ENCODE measurements at regions of chr7 and their contacts with region 1.

Region 1: GRCh38 chr7:137953665-137954470 is 48.0 kb downstream of the CREB3L2 start:
- DNase-seq: no peak
- ATAC-seq: no peak
- H3K4me3 ChIP-seq: no peak overlapping the region
- H3K27ac ChIP-seq: peak overlapping the region in 4 of 10 donors; percentile 5 to 47 (median 21)
- H3K4me1 ChIP-seq: peaks cover 3 to 93% (median 66%) of the 10 kb centered on the region in 9 donors
- H3K27me3 ChIP-seq: no peaks in the 10 kb centered on the region
- CTCF ChIP-seq: no peak

Region 2: GRCh38 chr7:137742051-137742450 is 211.8 kb before region 1 on chr7:
- intact Hi-C with region 1: no loop called
- DNase-seq: no peak
- ATAC-seq: no peak
- H3K4me3 ChIP-seq: no peak overlapping the region
- H3K27ac ChIP-seq: no peak overlapping the region
- H3K4me1 ChIP-seq: no peaks in the 10 kb centered on the region
- H3K27me3 ChIP-seq: peaks cover 0 to 6% (median 0%) of the 10 kb centered on the region in 7 donors
- CTCF ChIP-seq: no peak

Region 3: DNA sequence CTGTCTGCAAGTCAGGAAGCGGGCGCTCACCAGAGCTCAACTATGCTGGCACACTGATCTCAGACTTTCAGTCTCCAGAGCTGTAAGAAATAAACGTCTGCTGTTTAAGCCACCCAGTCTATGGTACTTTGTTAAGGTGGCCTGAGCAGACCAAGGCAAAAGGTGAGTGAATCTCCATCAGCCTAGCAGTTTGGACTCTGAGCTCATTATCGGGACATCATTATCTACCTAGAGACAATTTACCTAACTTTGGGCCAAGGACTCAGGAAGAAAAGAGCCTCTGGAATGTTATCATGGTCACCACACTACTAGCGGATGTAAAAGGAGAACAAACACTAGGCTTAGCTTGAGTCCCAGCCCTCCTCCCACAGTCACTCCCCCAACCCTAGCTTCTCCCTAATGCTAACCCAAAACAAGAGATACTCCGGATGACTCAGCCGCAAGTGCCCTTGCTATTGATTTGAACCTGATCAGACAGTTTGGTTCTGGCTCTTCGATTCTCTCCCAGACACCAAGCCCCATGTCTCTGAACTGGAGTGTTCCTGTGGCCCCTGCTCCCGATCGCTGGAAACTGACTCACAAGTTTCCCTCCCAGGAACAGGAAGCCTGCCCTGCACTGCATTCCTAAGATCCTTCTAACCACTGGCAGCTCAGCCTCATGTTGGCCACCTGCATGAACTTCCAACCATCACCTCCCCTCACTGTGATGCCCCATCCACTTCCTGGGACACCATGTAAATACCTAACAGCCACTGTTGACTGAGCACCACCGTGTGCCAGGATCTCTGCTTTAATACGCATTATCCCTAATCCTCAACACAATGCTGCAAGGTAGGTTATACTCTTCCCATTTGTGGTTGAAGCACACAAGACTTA is 13.5 kb after region 1 on chr7:
- intact Hi-C with region 1: loop called in 1 of 10 experiments (anchors 1 kb)
- DNase-seq: no peak
- ATAC-seq: peak in 2 of 8 donors; percentile 11 to 21
- H3K4me3 ChIP-seq: no peak overlapping the region
- H3K27ac ChIP-seq: peak overlapping the region in 4 of 10 donors; percentile 5 to 54 (median 17)
- H3K4me1 ChIP-seq: peaks cover 8 to 87% (median 54%) of the 10 kb centered on the region in 9 donors
- H3K27me3 ChIP-seq: no peaks in the 10 kb centered on the region
- CTCF ChIP-seq: no peak

Region 4: DNA sequence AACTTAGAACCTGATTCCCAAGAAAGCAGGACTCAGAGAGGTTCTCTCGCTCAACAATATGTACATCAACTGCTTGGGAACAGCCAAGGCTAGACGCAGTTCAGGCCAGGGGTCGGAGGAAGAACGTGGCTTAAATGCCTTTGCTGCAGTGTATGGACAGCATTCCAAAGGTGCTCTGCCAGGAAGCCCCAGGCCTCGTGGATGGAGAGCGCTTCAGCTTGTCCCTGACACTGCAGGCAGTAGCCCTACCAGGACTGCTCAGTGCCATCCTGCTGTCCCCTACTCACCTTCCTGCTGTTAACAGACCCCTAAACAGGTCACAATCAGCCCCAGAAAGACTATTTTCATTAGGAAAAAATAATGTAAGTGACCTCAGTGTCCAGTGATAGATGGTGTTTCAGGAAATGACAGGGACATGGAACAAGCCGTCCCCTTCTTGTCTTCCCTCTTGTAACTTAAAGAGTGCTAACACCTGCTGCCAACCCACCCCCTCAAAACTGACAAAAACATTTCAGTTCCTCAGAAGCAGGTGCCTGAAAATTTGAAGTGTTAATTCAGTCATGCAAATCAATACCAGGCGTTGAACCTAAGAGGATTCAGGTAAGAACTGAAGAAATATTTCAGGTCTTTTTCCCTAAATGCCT is 31.5 kb after region 1 on chr7:
- intact Hi-C with region 1: loop called in 3 of 10 experiments (anchors 1 to 5 kb)
- DNase-seq: no peak
- ATAC-seq: no peak
- H3K4me3 ChIP-seq: no peak overlapping the region
- H3K27ac ChIP-seq: peak overlapping the region in 5 of 10 donors; percentile 9 to 90 (median 62)
- H3K4me1 ChIP-seq: peaks cover 24 to 100% (median 82%) of the 10 kb centered on the region in 9 donors
- H3K27me3 ChIP-seq: no peaks in the 10 kb centered on the region
- CTCF ChIP-seq: no peak

Region 5: GRCh38 chr7:137992550-137993394 is 38.9 kb after region 1 on chr7:
- intact Hi-C with region 1: loop called in 2 of 10 experiments (anchors 5 kb)
- DNase-seq: peak in 1 of 2 donors; percentile 69
- ATAC-seq: peak; percentile 64 to 78 (median 69)
- H3K4me3 ChIP-seq: no peak overlapping the region
- H3K27ac ChIP-seq: peak overlapping the region; percentile 41 to 90 (median 68)
- H3K4me1 ChIP-seq: peaks cover 13 to 99% (median 94%) of the 10 kb centered on the region in 9 donors
- H3K27me3 ChIP-seq: no peaks in the 10 kb centered on the region
- CTCF ChIP-seq: no peak

Region 6: DNA sequence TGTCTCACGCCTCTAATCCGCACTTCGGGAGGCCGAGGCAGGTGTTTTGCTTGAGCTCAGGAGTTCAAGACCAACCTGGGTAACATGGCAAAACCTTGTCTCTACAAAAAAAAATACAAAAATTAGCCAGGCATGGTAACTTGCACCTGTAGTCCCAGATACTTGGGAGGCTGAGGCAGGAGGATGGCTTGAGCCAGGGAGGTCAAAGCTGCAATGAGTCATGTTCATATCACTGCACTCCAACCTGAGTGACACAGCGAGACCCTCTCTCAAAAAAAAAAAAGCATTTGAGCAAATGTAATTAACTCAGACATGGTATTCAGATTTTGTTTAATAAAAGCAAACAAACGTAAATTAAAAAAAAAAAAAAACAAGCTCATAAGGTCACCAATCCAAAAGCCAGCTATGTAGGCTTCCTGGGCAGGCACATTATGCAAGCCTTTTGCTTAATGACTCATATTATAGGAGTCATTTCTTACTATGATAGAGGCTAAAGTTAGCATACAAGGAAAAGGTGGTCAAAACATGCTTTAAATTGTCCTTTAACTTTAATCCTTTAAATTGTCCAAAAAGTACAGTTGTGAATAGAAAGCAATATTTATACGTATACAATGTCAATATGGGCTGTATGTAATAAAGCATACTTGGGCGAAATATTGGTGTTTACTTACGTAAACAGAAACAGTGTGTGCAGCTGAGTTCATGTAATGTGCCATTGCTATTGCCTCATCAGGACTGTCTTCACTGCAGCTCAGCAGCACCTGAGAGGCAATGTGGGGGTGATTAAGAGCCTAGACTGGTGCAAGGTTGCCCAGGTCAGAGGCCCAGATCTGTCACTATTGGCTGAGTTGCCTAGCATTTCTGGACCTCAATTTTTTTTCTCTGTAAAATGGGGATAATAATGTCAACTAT is 135.5 kb after region 1 on chr7:
- intact Hi-C with region 1: no loop called
- DNase-seq: no peak
- ATAC-seq: no peak
- H3K4me3 ChIP-seq: no peak overlapping the region
- H3K27ac ChIP-seq: no peak overlapping the region
- H3K4me1 ChIP-seq: no peaks in the 10 kb centered on the region
- H3K27me3 ChIP-seq: no peaks in the 10 kb centered on the region
- CTCF ChIP-seq: no peak

Measured in heart right ventricle (tissue), 16 donors.